ENCODE measurements at regions of chr15 and their contacts with region 1.

Region 1: GRCh38 chr15:32956006-32956405 is 238.2 kb downstream of the GREM1 start:
- DNase-seq: peak; percentile 33
- ATAC-seq: peak; percentile 77
- H3K4me3 ChIP-seq: no peak overlapping the region
- H3K27ac ChIP-seq: no peak overlapping the region
- H3K4me1 ChIP-seq: no peaks in the 10 kb centered on the region
- H3K27me3 ChIP-seq: no peaks in the 10 kb centered on the region
- CTCF ChIP-seq: peak; percentile 54 to 68 (median 68); a peak in 5 of 6 replicates
- POLR2A ChIP-seq: no peak
- RAD21 ChIP-seq: peak; percentile 59

Region 2: DNA sequence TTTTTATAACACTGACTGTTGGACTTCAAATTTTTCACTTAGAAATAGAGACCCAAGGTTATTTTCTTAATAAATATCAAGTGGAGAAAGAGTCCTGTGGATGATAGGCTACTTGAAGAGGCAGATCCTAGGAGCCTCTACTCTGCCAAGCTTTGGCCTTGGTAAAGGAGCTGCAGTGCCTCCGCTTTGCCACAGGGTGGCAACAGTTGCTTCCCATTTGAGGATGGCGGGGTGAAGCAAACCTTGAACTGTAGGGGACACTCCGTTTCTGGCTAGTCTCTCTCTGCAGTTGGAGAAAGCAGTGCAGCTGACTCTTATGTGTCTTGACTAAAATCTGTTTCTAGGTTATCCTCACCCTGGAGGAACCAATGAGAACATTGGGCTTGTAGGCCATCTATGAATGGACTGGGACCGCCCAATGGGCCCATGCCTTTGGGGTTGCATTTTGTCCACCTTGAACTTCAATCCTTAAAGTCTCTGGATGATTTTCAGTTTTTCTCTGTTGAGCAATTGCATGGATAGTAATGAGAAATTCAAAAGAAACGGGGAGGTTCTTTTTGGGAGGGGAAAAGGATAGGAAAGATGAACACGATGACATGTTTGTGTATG is 304.7 kb before region 1 on chr15:
- CTCF ChIA-PET with region 1: interaction called, 11 read pairs
- POLR2A ChIA-PET with region 1: no interaction called
- RAD21 ChIA-PET with region 1: no interaction called
- intact Hi-C with region 1: no loop called
- DNase-seq: peak; percentile 23
- ATAC-seq: peak; percentile 90
- H3K4me3 ChIP-seq: no peak overlapping the region
- H3K27ac ChIP-seq: no peak overlapping the region
- H3K4me1 ChIP-seq: no peaks in the 10 kb centered on the region
- H3K27me3 ChIP-seq: no peaks in the 10 kb centered on the region
- CTCF ChIP-seq: peak; percentile 60 to 96 (median 88); a peak in 5 of 6 replicates
- POLR2A ChIP-seq: no peak
- RAD21 ChIP-seq: peak; percentile 47

Region 3: DNA sequence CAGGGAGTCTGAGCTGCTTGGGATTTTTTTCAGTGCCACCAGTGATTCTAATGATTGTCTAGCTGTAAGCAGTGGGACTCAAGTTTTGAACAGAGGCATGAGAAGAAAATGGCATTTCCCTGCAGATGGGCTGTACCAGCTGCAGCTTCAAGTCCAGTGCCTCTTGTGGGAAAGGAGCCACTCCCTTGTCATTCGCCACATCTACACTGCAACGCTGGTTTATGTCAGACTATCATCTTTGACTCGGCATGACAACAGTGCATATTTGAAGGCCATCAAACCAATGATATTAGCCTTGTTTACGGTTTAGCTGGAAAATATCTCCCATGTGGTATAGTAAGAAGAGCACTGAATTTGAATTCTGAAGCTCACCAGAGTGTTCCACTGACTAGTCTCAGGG is 292.3 kb before region 1 on chr15:
- CTCF ChIA-PET with region 1: interaction called, 36 read pairs
- POLR2A ChIA-PET with region 1: no interaction called
- RAD21 ChIA-PET with region 1: interaction called, 3 to 8 read pairs
- intact Hi-C with region 1: loop called (anchors 5 kb)
- DNase-seq: no peak
- ATAC-seq: no peak
- H3K4me3 ChIP-seq: no peak overlapping the region
- H3K27ac ChIP-seq: no peak overlapping the region
- H3K4me1 ChIP-seq: no peaks in the 10 kb centered on the region
- H3K27me3 ChIP-seq: no peaks in the 10 kb centered on the region
- CTCF ChIP-seq: no peak
- POLR2A ChIP-seq: no peak
- RAD21 ChIP-seq: no peak

Region 4: GRCh38 chr15:32669896-32670619 is 285.9 kb before region 1 on chr15:
- CTCF ChIA-PET with region 1: interaction called, 3 read pairs
- POLR2A ChIA-PET with region 1: no interaction called
- RAD21 ChIA-PET with region 1: no interaction called
- intact Hi-C with region 1: loop called (anchors 5 kb)
- DNase-seq: no peak
- ATAC-seq: no peak
- H3K4me3 ChIP-seq: no peak overlapping the region
- H3K27ac ChIP-seq: no peak overlapping the region
- H3K4me1 ChIP-seq: no peaks in the 10 kb centered on the region
- H3K27me3 ChIP-seq: no peaks in the 10 kb centered on the region
- CTCF ChIP-seq: no peak
- POLR2A ChIP-seq: no peak
- RAD21 ChIP-seq: no peak

Region 5: DNA sequence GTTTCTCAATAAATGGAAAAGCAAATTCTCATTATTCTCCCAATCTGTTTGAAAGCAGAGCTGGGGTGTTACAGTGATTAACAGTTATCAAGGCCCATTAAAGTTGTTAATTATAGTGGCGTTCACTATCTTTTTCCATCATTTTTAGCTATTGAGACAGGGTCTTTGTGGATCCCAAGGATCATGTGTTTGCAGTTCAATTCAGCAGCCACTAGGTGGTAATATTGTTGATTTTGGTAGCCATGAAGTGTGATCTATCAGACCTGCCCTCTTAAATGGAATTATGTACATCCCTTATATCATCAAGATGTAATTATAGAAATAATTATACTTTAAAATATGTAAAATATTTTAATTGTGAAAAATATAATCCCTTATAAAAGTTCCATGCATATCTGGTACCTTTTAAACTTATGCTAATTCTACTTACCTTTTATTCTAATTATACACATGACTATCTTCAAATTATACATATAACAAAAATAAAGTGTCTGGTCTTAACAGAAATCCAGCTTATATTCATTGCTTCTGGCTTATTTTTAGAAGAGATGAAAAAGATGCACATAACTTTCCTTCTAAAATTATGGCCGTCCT is 111.8 kb before region 1 on chr15:
- CTCF ChIA-PET with region 1: interaction called, 38 read pairs
- POLR2A ChIA-PET with region 1: no interaction called
- RAD21 ChIA-PET with region 1: interaction called, 3 to 5 read pairs
- intact Hi-C with region 1: loop called (anchors 1 kb)
- DNase-seq: peak; percentile 40
- ATAC-seq: peak; percentile 61
- H3K4me3 ChIP-seq: no peak overlapping the region
- H3K27ac ChIP-seq: no peak overlapping the region
- H3K4me1 ChIP-seq: no peaks in the 10 kb centered on the region
- H3K27me3 ChIP-seq: peaks cover 18% of the 10 kb centered on the region; the same call in 1 of the 2 replicates
- CTCF ChIP-seq: peak; percentile 45 to 69 (median 68); a peak in 5 of 6 replicates
- POLR2A ChIP-seq: no peak
- RAD21 ChIP-seq: peak; percentile 61

Measured in HCT116 (cell line).